ENCODE measurements at regions of chr4 and their contacts with region 1.

Region 1: DNA sequence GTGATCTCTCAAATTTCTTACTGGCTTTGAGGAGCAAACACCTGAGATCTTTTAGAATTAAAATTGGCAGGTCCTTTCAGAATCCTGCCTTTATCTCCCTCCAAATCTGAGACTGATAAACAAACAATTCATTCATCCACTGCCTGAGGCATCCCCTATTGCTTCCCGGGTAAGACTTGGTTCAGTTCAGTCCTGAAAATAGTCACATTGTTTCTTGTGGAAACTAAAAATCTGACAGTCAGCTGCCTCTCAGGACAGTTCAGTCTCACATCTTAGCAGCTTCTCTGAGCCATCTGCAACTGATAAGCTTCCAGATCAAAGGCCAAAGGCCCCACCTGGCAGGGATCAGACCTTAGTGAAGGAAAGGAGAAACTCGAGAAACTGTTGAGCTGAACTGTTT is 264.4 kb downstream of the IL15 start:
- DNase-seq: no peak
- H3K4me3 ChIP-seq: no peak overlapping the region
- CTCF ChIP-seq: no peak

Region 2: DNA sequence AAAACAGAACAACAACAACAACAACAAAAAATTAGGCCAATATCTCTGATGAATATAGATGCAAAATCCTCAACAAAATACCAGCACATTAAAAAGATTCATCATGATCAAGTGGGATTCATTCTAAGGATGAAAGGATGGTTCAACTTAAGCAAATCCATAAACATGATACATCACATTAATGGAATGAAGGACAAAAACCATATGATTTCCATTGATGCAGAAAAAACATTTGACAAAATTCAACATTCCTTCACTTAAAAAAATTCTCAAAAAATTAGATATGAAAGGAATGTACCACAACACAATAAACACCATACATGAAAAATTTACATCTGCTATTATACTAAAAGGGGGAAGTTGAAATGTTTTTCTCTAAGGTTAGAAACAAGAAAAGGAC is 161.2 kb before region 1 on chr4:
- in situ Hi-C with region 1: no loop called
- DNase-seq: no peak
- H3K4me3 ChIP-seq: no peak overlapping the region
- CTCF ChIP-seq: no peak

Region 3: GRCh38 chr4:141977433-141977832 is 76.6 kb after region 1 on chr4:
- in situ Hi-C with region 1: loop called (anchors 10 kb)
- DNase-seq: no peak
- H3K4me3 ChIP-seq: no peak overlapping the region
- CTCF ChIP-seq: no peak